Endothelial cell of umbilical vein (primary cell): ENCODE measurements at regions of chr4 and their contacts with region 1.

Region 1: DNA sequence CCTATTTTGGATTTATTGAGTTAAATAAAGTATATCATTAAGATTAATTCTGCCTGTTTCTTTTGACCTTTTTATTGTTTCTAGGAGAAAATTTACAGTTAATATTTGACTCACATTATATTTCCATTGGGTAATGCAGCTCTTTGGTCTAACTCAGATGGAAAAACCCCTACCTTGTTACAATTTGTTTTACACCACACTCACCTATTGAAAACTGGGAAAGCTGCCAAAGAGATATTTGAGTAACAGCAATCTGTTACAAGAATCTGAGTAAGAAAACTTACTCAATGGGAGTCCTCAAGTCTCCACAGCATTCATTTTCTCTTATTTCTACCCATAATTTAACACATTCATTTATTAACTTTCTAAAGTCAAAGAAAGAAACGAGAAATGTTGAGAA is 108.0 kb upstream of the TLL1 start:
- DNase-seq: peak; percentile 30
- H3K4me3 ChIP-seq: no peak overlapping the region
- H3K27ac ChIP-seq: no peak overlapping the region
- H3K4me1 ChIP-seq: peaks cover 39% of the 10 kb centered on the region
- H3K27me3 ChIP-seq: no peaks in the 10 kb centered on the region
- CTCF ChIP-seq: no peak
- POLR2A ChIP-seq: no peak

Region 2: GRCh38 chr4:165668694-165669093 is 96.4 kb before region 1 on chr4:
- CTCF ChIA-PET with region 1: no interaction called
- POLR2A ChIA-PET with region 1: no interaction called
- dilution Hi-C with region 1: no loop called
- intact Hi-C with region 1: no loop called
- DNase-seq: no peak
- H3K4me3 ChIP-seq: no peak overlapping the region
- H3K27ac ChIP-seq: no peak overlapping the region
- H3K4me1 ChIP-seq: no peaks in the 10 kb centered on the region
- H3K27me3 ChIP-seq: no peaks in the 10 kb centered on the region
- CTCF ChIP-seq: no peak
- POLR2A ChIP-seq: no peak

Region 3: GRCh38 chr4:165700855-165701254 is 64.2 kb before region 1 on chr4:
- CTCF ChIA-PET with region 1: no interaction called
- POLR2A ChIA-PET with region 1: no interaction called
- dilution Hi-C with region 1: no loop called
- intact Hi-C with region 1: no loop called
- DNase-seq: no peak
- H3K4me3 ChIP-seq: no peak overlapping the region
- H3K27ac ChIP-seq: no peak overlapping the region
- H3K4me1 ChIP-seq: no peaks in the 10 kb centered on the region
- H3K27me3 ChIP-seq: no peaks in the 10 kb centered on the region
- CTCF ChIP-seq: peak; percentile 3 to 5
- POLR2A ChIP-seq: no peak

Region 4: GRCh38 chr4:165740911-165741310 is 24.1 kb before region 1 on chr4:
- CTCF ChIA-PET with region 1: no interaction called
- POLR2A ChIA-PET with region 1: no interaction called
- dilution Hi-C with region 1: no loop called
- intact Hi-C with region 1: loop called (anchors 1 kb)
- DNase-seq: peak; percentile 76
- H3K4me3 ChIP-seq: peak overlapping the region in 1 of 3 experiments; percentile 14
- H3K27ac ChIP-seq: peak overlapping the region; percentile 0
- H3K4me1 ChIP-seq: peaks cover 25% of the 10 kb centered on the region
- H3K27me3 ChIP-seq: no peaks in the 10 kb centered on the region
- CTCF ChIP-seq: no peak
- POLR2A ChIP-seq: peak; percentile 81